ENCODE measurements at regions of chr19 and their contacts with region 1.

Region 1: GRCh38 chr19:17305517-17306284 is at the start of gene MRPL34:
- DNase-seq: peak; percentile 88
- ATAC-seq: peak; percentile 69
- H3K4me3 Mint-ChIP-seq: peak within 1 kb of the TSS; percentile 88
- H3K27ac Mint-ChIP-seq: peak within 1 kb of the TSS; percentile 91
- H3K4me1 Mint-ChIP-seq: peaks cover 51% of the 10 kb centered on the region
- H3K27me3 Mint-ChIP-seq: no peaks in the 10 kb centered on the region
- CTCF ChIP-seq: no peak
- total RNA-seq, gene MRPL34: 38.2 and 46.1 TPM in 2 replicates

Region 2: DNA sequence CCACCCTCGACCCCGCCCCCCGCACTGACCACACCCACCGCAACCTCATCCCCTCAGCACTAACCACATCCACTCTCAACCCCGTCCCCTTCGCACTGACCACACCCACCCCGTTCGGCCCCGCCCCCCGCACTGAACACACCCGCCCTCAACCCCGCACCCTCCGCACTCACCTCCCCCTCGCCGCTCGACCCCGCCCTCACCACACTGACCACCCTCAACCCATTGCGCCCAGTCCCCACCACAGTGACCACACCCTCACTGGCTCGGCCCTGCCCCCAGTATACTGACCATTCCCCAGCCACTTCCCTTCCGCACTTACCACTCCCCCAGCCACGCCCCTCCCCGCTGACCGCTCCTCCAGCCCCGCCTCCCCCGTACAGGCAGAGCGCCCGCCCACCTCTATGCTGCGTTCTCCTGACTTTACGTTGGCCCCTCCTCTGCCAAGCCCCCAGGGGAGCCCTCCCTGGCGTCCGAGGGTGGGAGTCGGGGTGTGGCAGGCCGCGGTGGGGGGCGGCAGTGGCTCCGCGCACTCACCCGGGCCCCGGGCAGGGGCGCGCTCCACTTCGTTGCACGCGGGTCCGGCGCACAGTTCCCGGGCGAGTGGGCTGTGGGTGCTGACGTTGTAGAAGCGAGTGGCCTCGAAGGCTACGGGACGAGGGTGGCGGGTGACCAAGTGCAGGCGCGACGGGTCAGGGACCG is 408.4 kb before region 1 on chr19:
- CTCF ChIA-PET with region 1: no interaction called
- POLR2A ChIA-PET with region 1: no interaction called
- intact Hi-C with region 1: loop called (anchors 10 kb)
- DNase-seq: peak; percentile 67
- ATAC-seq: peak; percentile 74
- H3K4me3 Mint-ChIP-seq: peak overlapping the region; percentile 81
- H3K27ac Mint-ChIP-seq: peak overlapping the region; percentile 24
- H3K4me1 Mint-ChIP-seq: peaks cover 46% of the 10 kb centered on the region
- H3K27me3 Mint-ChIP-seq: no peaks in the 10 kb centered on the region
- CTCF ChIP-seq: no peak

Region 3: DNA sequence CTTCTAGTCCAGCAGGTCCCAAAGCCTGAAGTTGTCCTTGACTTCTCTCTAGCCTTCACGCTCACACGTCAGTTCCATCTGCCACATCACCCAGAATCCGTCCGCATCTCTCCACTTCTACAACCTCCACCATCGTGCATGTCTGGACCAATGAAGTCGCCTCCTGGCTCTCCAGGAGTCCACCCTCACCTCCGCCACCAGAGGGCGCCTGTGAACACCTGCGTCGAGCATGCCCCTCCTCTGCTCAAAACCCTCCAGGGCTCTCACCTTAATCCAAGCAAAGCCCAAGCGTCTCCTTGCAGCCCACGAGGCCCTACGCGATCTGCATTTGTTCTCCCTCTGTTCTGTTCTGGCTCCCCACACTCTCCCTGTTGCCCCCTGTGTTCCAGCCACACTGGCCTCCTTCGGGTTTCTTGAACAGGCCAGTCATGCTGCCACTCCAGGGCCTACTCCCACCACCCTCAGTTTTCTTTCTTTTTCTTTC is 44.8 kb before region 1 on chr19:
- CTCF ChIA-PET with region 1: interaction called, 3 read pairs
- POLR2A ChIA-PET with region 1: interaction called, 3 read pairs
- intact Hi-C with region 1: loop called (anchors 1 kb)
- DNase-seq: peak; percentile 83
- ATAC-seq: peak; percentile 100
- H3K4me3 Mint-ChIP-seq: no peak overlapping the region
- H3K27ac Mint-ChIP-seq: no peak overlapping the region
- H3K4me1 Mint-ChIP-seq: peaks cover 11% of the 10 kb centered on the region
- H3K27me3 Mint-ChIP-seq: no peaks in the 10 kb centered on the region
- CTCF ChIP-seq: peak; percentile 74

Region 4: GRCh38 chr19:17292286-17293097 is 13.2 kb before region 1 on chr19:
- CTCF ChIA-PET with region 1: interaction called, 14 read pairs
- POLR2A ChIA-PET with region 1: interaction called, 11 read pairs
- intact Hi-C with region 1: loop called (anchors 1 kb)
- DNase-seq: peak; percentile 90
- ATAC-seq: peak; percentile 91
- H3K4me3 Mint-ChIP-seq: peak overlapping the region; percentile 85
- H3K27ac Mint-ChIP-seq: peak overlapping the region; percentile 53
- H3K4me1 Mint-ChIP-seq: peaks cover 10% of the 10 kb centered on the region
- H3K27me3 Mint-ChIP-seq: peaks cover 2% of the 10 kb centered on the region
- CTCF ChIP-seq: no peak

Region 5: DNA sequence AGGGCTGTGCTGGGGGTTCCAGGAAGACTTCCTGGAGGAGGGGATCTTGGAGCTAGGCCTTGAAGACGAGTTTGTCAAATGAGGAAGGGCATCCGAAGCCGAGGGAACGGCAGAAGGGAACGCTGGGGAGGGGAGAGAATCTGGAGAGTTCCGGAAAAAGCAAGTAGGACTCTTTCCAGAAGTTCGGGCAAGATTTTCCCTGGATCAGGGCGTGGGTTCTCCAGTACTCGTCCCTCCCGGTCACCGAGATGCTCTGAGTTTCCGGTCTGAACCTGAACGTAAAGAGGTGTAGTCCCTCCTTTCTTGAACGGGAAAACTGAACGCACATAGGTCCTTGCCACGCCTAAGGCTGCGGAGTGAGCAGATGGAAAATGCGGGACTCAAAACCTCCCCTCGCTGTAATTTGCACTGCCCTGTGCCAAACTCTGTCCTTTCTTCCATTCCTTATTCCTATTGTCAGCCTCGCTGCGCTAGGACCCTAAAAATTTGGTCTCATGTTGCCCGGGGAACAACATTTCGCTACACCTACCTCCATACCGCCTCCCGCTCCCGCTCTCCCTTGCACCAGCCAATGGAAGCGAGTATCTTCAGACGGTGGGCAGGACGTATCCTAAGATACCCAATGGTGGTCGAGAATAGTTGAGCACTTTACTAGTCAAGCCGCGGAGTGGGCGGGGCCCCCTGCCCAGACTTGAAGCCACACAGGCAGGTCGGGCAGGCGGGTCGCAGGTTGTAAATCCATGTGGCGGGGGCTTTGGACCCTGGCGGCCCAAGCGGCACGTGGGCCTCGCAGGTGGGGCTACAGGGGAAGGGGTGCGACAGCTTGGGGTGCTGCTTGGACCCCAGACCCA is 31.4 kb after region 1 on chr19 and contains the start of gene GTPBP3:
- CTCF ChIA-PET with region 1: interaction called, 9 read pairs
- POLR2A ChIA-PET with region 1: interaction called, 13 read pairs
- intact Hi-C with region 1: loop called (anchors 1 kb)
- DNase-seq: peak; percentile 87
- ATAC-seq: peak; percentile 88
- H3K4me3 Mint-ChIP-seq: peak within 1 kb of the TSS; percentile 90
- H3K27ac Mint-ChIP-seq: peak within 1 kb of the TSS; percentile 89
- H3K4me1 Mint-ChIP-seq: peaks cover 36% of the 10 kb centered on the region
- H3K27me3 Mint-ChIP-seq: no peaks in the 10 kb centered on the region
- CTCF ChIP-seq: no peak
- total RNA-seq, gene GTPBP3: 32.4 and 40.2 TPM in 2 replicates

Region 6: DNA sequence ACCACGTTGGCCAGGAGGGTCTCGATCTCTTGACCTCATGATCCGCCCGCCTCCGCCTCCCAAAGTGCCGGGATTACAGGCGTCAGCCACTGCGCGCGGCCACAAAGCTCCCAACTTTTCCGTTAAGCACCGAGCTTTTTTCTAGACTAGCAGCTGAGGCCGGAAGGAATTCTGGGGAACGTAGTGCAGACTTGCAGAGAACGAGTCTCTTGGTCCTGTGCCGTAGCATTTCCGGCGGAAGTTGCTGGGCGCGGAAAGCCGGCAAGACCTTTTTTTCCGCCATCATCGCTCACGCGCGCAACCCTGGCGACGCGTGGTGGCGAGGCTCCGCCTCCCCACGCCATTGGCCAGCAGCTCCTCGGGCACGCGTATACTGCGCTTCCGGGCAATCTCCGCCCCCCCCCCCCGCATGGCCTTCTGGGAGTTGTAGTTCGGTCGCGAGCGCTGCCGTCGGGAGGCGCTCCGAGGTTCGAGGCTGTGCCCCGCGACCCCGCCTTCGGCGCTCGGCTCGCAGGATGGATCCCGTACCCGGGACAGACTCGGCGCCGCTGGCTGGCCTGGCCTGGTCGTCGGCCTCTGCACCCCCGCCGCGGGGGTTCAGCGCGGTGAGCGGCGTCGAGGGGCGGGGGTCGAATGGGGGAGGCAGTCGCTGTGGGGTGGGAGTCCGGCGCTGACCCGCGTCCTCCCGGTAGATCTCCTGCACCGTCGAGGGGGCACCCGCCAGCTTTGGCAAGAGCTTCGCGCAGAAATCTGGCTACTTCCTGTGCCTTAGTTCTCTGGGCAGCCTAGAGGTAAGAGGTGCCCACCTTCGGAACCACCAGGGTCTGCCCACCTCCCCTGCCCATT is 114.1 kb after region 1 on chr19 and contains the start of gene MVB12A:
- CTCF ChIA-PET with region 1: interaction called, 3 read pairs
- POLR2A ChIA-PET with region 1: interaction called, 19 read pairs
- intact Hi-C with region 1: loop called (anchors 1 kb)
- DNase-seq: peak; percentile 91
- ATAC-seq: peak; percentile 97
- H3K4me3 Mint-ChIP-seq: peak within 1 kb of the TSS; percentile 95
- H3K27ac Mint-ChIP-seq: peak within 1 kb of the TSS; percentile 93
- H3K4me1 Mint-ChIP-seq: peaks cover 16% of the 10 kb centered on the region
- H3K27me3 Mint-ChIP-seq: no peaks in the 10 kb centered on the region
- CTCF ChIP-seq: no peak
- total RNA-seq, gene MVB12A: 22.8 and 23.3 TPM in 2 replicates